ENCODE measurements at regions of chr15 and their contacts with region 1.

Region 1: GRCh38 chr15:40893733-40894688 is at the start of gene VPS18:
- DNase-seq: peak; percentile 72
- H3K4me3 ChIP-seq: peak within 1 kb of the TSS; percentile 95
- H3K27me3 ChIP-seq: no peaks in the 10 kb centered on the region
- CTCF ChIP-seq: peak; percentile 92
- polyA plus RNA-seq, gene VPS18: 18.2 and 28.4 TPM in 2 replicates

Region 2: DNA sequence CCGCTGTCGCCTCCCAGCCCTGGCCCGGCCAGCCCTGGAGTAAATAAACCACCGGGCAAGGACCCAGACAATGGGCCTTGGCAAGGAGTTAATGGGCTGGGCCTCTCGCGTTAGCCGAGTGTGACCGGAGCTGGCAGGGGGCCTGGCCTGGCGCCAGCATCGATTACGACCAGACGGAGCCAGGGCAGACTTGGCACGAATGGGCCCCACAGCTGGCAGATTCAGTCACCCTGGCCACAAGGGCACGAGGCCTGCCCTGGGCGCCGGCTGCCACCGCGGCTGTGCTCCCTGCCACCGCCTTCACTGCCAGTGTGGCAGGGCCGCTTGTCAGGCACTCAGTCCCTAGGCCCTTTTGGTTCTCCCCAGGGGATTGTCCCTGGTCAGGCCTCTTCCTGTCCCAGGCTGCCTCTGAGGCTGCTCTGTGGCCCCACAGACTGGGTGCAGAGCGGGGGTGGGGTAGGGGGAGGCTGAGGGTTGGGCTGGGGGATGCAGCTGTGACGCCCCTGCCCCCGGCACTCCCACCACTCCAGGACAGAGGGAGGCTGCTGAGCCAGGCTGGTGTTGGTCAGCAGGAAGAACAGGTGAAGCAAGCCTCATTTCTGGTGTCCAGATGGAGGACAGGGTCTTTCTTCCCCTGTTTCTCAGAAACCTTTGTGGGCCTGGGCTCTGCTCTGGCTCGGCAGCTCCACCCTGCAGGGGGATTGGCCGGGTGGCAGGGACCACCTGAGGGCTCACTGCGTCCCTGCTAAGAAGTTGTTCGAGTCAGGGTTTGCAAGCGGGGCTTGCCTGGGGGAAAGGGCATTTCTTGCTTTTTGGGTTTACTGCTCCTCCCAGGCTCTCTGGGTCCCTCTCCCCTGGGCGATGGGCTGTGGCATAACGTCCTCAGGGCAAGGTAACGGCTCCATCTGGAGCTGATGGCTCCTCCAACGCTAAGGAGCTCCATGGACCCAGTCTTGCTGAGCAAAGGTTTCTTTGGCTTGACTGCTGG is 824.5 kb before region 1 on chr15:
- CTCF ChIA-PET with region 1: no interaction called
- POLR2A ChIA-PET with region 1: no interaction called
- DNase-seq: no peak
- H3K4me3 ChIP-seq: no peak overlapping the region
- H3K27me3 ChIP-seq: no peaks in the 10 kb centered on the region
- CTCF ChIP-seq: no peak

Region 3: DNA sequence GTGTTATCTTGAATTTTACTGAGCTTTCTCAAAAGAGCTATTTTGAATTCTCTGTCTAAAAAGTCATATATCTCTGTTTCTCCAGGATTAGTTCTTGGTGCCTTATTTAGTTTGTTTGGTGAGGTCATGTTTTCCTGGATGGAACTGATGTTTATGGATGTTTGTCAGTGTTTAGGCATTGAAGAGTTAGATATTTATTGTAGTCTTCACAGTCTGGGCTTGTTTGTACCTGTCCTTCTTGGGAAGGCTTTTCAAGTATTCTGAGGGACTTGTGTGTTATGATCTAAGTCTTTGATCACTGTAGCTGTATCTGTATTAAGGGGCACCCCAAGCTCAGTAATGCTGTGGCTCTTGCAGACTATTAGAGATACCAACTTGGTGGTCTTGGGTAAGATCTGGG is 209.6 kb before region 1 on chr15:
- CTCF ChIA-PET with region 1: interaction called, 16 read pairs
- POLR2A ChIA-PET with region 1: no interaction called
- DNase-seq: no peak
- H3K4me3 ChIP-seq: no peak overlapping the region
- H3K27me3 ChIP-seq: no peaks in the 10 kb centered on the region
- CTCF ChIP-seq: no peak

Region 4: GRCh38 chr15:40743921-40744814 is 149.8 kb before region 1 on chr15:
- CTCF ChIA-PET with region 1: interaction called, 10 read pairs
- POLR2A ChIA-PET with region 1: no interaction called
- DNase-seq: no peak
- H3K4me3 ChIP-seq: no peak overlapping the region
- H3K27me3 ChIP-seq: no peaks in the 10 kb centered on the region
- CTCF ChIP-seq: no peak

Region 5: GRCh38 chr15:40857601-40858341 is 36.2 kb before region 1 on chr15:
- CTCF ChIA-PET with region 1: interaction called, 201 read pairs
- POLR2A ChIA-PET with region 1: interaction called, 7 read pairs
- DNase-seq: no peak
- H3K4me3 ChIP-seq: no peak overlapping the region
- H3K27me3 ChIP-seq: no peaks in the 10 kb centered on the region; the same call in 1 of the 2 replicates
- CTCF ChIP-seq: peak; percentile 100

Region 6: DNA sequence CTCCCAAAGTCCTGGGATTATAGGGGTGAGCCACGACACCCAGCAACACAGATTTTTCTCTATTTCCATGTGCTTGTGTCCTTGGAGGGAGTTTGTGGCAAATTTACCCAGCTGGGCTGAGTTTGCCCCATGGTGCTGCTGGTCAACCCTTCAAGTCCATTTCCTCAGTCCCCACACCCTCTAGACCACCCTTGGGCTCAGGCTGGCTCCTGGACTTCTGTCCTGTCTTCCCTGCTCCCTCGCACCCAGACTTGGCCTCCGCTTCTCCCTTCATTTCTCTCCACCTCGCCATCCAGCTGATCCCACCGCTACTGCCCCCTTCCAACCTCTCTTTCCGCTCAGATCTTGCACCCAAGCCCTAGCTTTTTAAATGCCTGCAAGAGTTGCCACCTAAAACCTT is 12.7 kb before region 1 on chr15:
- CTCF ChIA-PET with region 1: interaction called, 33 read pairs
- POLR2A ChIA-PET with region 1: no interaction called
- DNase-seq: no peak
- H3K4me3 ChIP-seq: no peak overlapping the region
- H3K27me3 ChIP-seq: no peaks in the 10 kb centered on the region
- CTCF ChIP-seq: no peak

Region 7: DNA sequence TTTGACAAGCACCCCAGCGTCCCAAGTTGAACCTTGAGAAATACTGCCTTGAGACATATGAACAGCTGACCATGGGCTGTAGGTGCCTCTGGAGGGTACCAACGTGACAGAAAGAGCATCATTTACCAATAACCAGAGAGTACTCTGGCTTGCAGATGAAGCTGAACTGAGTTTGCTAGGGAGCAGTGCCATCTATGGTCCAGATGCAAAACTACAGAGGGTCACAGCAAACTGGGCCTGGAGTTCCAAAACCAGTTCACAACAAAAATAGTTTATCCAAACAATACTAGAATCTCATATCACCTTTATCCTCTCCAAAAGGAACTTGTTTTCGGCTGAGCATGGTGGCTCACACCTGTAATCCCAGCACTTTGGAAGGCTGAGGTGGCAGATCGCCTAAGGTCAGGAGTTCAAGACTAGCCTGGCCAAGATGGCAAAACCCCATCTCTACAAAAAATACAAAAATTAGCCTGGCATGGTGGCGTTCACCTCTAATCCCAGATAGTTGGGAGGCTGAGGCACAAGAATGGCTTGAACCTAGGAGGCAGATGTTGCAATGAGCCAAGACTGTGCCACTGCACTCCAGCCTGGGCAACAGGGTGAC is 128.6 kb after region 1 on chr15:
- CTCF ChIA-PET with region 1: interaction called, 28 read pairs
- POLR2A ChIA-PET with region 1: no interaction called
- DNase-seq: no peak
- H3K4me3 ChIP-seq: no peak overlapping the region
- H3K27me3 ChIP-seq: no peaks in the 10 kb centered on the region
- CTCF ChIP-seq: peak; percentile 88